PC-3 (cell line): ENCODE measurements at regions of chr5 and their contacts with region 1.

Region 1: GRCh38 chr5:172984243-172984953 is 827 bp downstream of the ATP6V0E1 start:
- DNase-seq: peak; percentile 67
- ATAC-seq: peak; percentile 61
- H3K4me3 ChIP-seq: peak overlapping the region; percentile 86
- H3K27ac ChIP-seq: peak overlapping the region; percentile 62
- H3K4me1 ChIP-seq: peaks cover 13% of the 10 kb centered on the region
- H3K27me3 ChIP-seq: no peaks in the 10 kb centered on the region
- CTCF ChIP-seq: peak; percentile 56

Region 2: GRCh38 chr5:172958331-172959046 is 25.9 kb before region 1 on chr5:
- CTCF ChIA-PET with region 1: no interaction called
- POLR2A ChIA-PET with region 1: interaction called, 11 read pairs
- intact Hi-C with region 1: no loop called
- DNase-seq: peak; percentile 59
- ATAC-seq: peak; percentile 74
- H3K4me3 ChIP-seq: peak overlapping the region; percentile 92
- H3K27ac ChIP-seq: no peak overlapping the region
- H3K4me1 ChIP-seq: peaks cover 22% of the 10 kb centered on the region
- H3K27me3 ChIP-seq: no peaks in the 10 kb centered on the region
- CTCF ChIP-seq: no peak

Region 3: GRCh38 chr5:173057062-173057924 is 72.9 kb after region 1 on chr5:
- CTCF ChIA-PET with region 1: interaction called, 5 read pairs
- POLR2A ChIA-PET with region 1: no interaction called
- intact Hi-C with region 1: loop called (anchors 1 kb)
- DNase-seq: peak; percentile 98
- ATAC-seq: peak; percentile 88
- H3K4me3 ChIP-seq: peak overlapping the region; percentile 79
- H3K27ac ChIP-seq: peak overlapping the region; percentile 42
- H3K4me1 ChIP-seq: peaks cover 6% of the 10 kb centered on the region; the same call in 1 of the 2 replicates
- H3K27me3 ChIP-seq: no peaks in the 10 kb centered on the region
- CTCF ChIP-seq: no peak

Region 4: GRCh38 chr5:173204185-173204979 is 220.0 kb after region 1 on chr5:
- CTCF ChIA-PET with region 1: interaction called, 6 read pairs
- POLR2A ChIA-PET with region 1: no interaction called
- intact Hi-C with region 1: loop called (anchors 1 kb)
- DNase-seq: peak; percentile 63
- ATAC-seq: no peak
- H3K4me3 ChIP-seq: no peak overlapping the region
- H3K27ac ChIP-seq: no peak overlapping the region
- H3K4me1 ChIP-seq: peaks cover 15% of the 10 kb centered on the region
- H3K27me3 ChIP-seq: peaks cover 9% of the 10 kb centered on the region; the same call in 1 of the 2 replicates
- CTCF ChIP-seq: peak; percentile 75

Region 5: GRCh38 chr5:173293817-173294672 is 309.6 kb after region 1 on chr5:
- CTCF ChIA-PET with region 1: interaction called, 3 read pairs
- POLR2A ChIA-PET with region 1: no interaction called
- intact Hi-C with region 1: loop called (anchors 5 kb)
- DNase-seq: peak; percentile 91
- ATAC-seq: peak; percentile 83
- H3K4me3 ChIP-seq: peak overlapping the region; percentile 49; the same call in 1 of the 2 replicates
- H3K27ac ChIP-seq: no peak overlapping the region
- H3K4me1 ChIP-seq: peaks cover 6% of the 10 kb centered on the region; the same call in 1 of the 2 replicates
- H3K27me3 ChIP-seq: no peaks in the 10 kb centered on the region
- CTCF ChIP-seq: peak; percentile 94